Calu3 (cell line): ENCODE measurements at regions of chr3 and their contacts with region 1.

Region 1: DNA sequence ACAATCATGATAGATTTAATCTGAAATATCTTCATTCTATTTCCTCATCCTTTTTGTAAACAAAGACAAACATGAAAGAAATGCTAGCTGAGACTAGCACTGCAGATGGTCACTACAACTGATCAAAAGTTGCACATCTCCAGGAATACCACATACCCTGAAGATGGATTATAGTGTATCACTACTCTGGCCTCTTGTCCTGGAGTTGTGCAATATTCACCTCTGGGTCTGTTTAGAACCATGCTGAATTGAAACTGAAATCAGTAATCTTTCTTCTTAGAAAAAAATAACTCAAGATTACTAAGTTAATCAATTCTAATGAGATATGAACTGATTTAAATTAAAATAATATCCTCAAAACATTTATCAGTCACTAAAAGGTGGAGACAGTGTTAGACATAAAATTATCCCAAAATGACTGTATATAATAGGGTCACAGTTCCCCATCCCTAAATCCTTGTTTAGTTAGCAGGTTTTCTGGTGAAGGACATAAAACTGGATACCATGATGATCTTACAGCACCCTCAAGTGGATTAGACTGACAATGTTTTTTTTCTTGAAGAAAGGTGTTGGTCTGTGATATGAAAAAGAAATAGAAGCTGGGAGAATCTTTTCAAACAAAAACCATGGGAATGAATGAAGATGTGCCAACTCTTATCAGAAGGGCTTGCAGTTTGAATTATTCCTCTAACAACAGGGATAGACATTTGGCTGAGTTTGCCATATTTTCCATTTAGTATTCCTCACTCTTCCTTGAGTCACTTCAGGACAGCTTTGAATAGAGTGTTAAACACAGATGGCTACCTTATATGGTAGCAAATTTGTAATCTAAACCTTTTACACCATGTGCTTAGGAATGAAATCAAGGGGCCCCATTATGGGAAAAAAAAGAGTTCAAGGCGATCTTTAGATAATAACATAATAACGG is 7.1 kb upstream of the TTC14 start:
- DNase-seq: no peak
- H3K4me3 Mint-ChIP-seq: no peak overlapping the region
- H3K27ac Mint-ChIP-seq: no peak overlapping the region
- H3K4me1 Mint-ChIP-seq: peaks cover 16% of the 10 kb centered on the region
- H3K27me3 Mint-ChIP-seq: no peaks in the 10 kb centered on the region
- CTCF ChIP-seq: peak; percentile 79

Region 2: DNA sequence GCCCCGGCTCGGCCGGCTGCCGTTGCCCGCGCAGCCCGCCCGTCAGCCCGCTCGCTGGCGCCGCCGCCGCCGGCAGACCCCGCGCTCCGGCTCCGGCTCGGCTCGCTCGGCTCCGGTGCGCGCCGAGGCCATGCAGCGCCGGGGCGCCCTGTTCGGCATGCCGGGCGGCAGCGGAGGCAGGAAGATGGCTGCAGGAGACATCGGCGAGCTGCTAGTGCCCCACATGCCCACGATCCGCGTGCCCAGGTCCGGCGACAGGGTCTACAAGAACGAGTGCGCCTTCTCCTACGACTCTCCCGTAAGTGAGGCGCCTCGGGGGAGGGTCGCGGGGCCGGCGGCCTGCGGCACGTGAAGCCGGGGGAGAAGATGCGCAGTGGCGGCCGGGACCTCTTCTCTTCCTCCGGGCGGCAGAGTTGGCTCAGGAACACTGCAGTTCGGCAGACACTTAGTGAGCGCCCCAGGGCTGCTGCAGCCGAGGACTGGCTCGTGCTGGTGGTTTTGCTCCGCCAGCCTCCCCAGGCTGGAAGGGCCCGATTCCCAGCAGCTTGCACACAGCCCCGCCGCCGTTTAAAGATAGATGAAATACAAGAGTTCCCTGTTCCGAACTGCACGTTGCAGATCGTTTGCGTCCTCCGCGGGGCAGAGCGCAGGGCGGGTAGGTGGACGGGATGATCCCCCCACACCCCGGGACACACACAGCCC is 941.6 kb before region 1 on chr3:
- CTCF ChIA-PET with region 1: interaction called, 3 read pairs
- intact Hi-C with region 1: loop called (anchors 5 kb)
- DNase-seq: peak; percentile 72
- H3K4me3 Mint-ChIP-seq: peak overlapping the region; percentile 84
- H3K27ac Mint-ChIP-seq: peak overlapping the region; percentile 61
- H3K4me1 Mint-ChIP-seq: peaks cover 40% of the 10 kb centered on the region
- H3K27me3 Mint-ChIP-seq: no peaks in the 10 kb centered on the region
- CTCF ChIP-seq: no peak

Region 3: DNA sequence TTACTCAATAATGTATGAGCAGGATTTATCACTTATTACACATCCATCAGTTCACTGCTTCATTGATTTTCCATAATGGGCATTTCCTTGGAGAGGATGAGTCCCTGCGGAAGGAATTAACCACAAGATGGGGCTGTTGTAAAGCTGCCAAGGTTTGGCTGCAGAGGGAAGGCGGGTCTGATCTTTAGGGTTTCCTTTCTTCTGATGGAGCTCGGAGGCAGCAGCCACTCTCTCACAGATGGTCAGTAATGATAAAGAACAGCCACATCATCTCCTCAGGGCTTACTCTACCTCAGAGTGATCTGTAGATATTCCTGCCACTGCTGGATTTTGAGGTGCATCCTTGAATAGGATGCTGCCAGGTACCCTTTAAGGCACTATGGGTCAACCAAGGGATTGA is 826.8 kb before region 1 on chr3:
- CTCF ChIA-PET with region 1: interaction called, 7 read pairs
- intact Hi-C with region 1: loop called (anchors 2 kb)
- DNase-seq: peak; percentile 53
- H3K4me3 Mint-ChIP-seq: no peak overlapping the region
- H3K27ac Mint-ChIP-seq: no peak overlapping the region
- H3K4me1 Mint-ChIP-seq: no peaks in the 10 kb centered on the region
- H3K27me3 Mint-ChIP-seq: no peaks in the 10 kb centered on the region
- CTCF ChIP-seq: peak; percentile 48

Region 4: DNA sequence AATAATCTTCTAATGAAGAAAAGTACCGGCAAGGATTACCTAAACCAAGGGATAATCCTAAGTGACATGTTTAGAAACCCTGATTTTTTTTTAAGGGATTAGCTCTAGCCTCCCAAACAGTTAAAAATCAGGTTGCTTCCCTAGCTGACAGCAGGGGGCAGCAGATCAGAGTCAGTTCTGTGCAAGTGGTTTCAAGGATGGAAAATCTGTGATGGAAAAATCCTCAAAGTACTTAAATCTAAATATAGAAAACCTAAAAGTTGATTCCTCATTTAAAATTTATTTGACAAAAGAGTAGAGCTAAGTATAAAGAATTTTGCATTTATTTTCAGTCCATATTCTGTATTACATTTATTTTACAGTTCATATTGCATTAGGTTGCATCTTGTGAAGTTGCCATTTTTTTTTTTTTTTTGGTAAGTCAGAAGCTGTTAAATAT is 665.8 kb before region 1 on chr3:
- CTCF ChIA-PET with region 1: interaction called, 32 read pairs
- intact Hi-C with region 1: loop called (anchors 1 kb)
- DNase-seq: peak; percentile 83
- H3K4me3 Mint-ChIP-seq: no peak overlapping the region
- H3K27ac Mint-ChIP-seq: no peak overlapping the region
- H3K4me1 Mint-ChIP-seq: peaks cover 8% of the 10 kb centered on the region
- H3K27me3 Mint-ChIP-seq: no peaks in the 10 kb centered on the region
- CTCF ChIP-seq: peak; percentile 92

Region 5: DNA sequence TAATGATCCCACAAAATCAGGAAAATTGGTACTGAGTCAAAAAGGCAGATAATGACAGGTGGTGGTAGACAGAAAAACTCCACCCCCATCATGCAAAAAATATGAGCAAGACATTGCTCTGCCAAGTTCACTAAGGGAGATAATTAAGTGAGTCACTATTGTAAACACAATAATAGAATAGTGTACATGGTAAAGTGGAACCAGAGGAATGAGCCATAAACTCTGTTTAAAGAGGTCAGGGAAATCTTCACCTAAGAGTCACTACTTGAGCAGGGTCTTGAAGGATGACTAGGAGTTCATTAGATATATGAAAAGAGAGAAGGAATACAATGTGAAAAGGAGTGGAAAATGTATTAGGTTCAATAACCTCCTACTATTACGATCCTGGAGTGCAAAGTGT is 344.7 kb before region 1 on chr3:
- CTCF ChIA-PET with region 1: no interaction called
- intact Hi-C with region 1: loop called (anchors 5 kb)
- DNase-seq: peak; percentile 13
- H3K4me3 Mint-ChIP-seq: peak overlapping the region; percentile 2
- H3K27ac Mint-ChIP-seq: peak overlapping the region; percentile 11
- H3K4me1 Mint-ChIP-seq: peaks cover 46% of the 10 kb centered on the region
- H3K27me3 Mint-ChIP-seq: no peaks in the 10 kb centered on the region
- CTCF ChIP-seq: no peak